Right cardiac atrium (tissue), 5 donors: ENCODE measurements at regions of chr22 and their contacts with region 1.

Region 1: GRCh38 chr22:23281406-23282088 is 101.2 kb downstream of the BCR start:
- DNase-seq: peak; percentile 83 to 93 (median 92)
- ATAC-seq: peak; percentile 71 to 76
- H3K4me3 ChIP-seq: no peak overlapping the region
- H3K27ac ChIP-seq: no peak overlapping the region
- H3K4me1 ChIP-seq: peaks cover 10% of the 10 kb centered on the region
- H3K27me3 ChIP-seq: no peaks in the 10 kb centered on the region

Region 2: GRCh38 chr22:23225724-23226496 is 55.6 kb before region 1 on chr22:
- intact Hi-C with region 1: loop called in 1 of 4 experiments (anchors 5 kb)
- DNase-seq: peak; percentile 83 to 86 (median 83)
- ATAC-seq: peak; percentile 76 to 90
- H3K4me3 ChIP-seq: no peak overlapping the region
- H3K27ac ChIP-seq: peak overlapping the region; percentile 87
- H3K4me1 ChIP-seq: peaks cover 38% of the 10 kb centered on the region
- H3K27me3 ChIP-seq: no peaks in the 10 kb centered on the region